T-cell (primary cell): ENCODE measurements at regions of chr14 and their contacts with region 1.

Region 1: GRCh38 chr14:64971943-64972791 is at the start of gene RAB15:
- DNase-seq: peak in 31 of 35 experiments; percentile 2 to 58 (median 28)
- ATAC-seq: peak; percentile 72 to 76 (median 74)
- H3K4me3 ChIP-seq: peak within 1 kb of the TSS; percentile 67 to 69
- H3K4me3 Mint-ChIP-seq: peak within 1 kb of the TSS; percentile 79 to 88 (median 83)
- H3K27ac ChIP-seq: no peak within 1 kb of the TSS
- H3K27ac Mint-ChIP-seq: peak within 1 kb of the TSS; percentile 27 to 53
- H3K4me1 ChIP-seq: peaks cover 0 to 16% of the 10 kb centered on the region in 2 experiments
- H3K4me1 Mint-ChIP-seq: peaks cover 22 to 26% (median 25%) of the 10 kb centered on the region in 3 donors
- H3K27me3 ChIP-seq: peaks cover 0 to 12% of the 10 kb centered on the region in 2 experiments
- H3K27me3 Mint-ChIP-seq: no peaks in the 10 kb centered on the region
- total RNA-seq, gene RAB15: 3.9 to 9.7 (median 4.3) TPM

Region 2: GRCh38 chr14:64215258-64215657 is 756.9 kb before region 1 on chr14:
- CTCF ChIA-PET with region 1: interaction called in 1 of 2 experiments, 11 read pairs
- POLR2A ChIA-PET with region 1: no interaction called
- DNase-seq: no peak
- ATAC-seq: no peak
- H3K4me3 ChIP-seq: no peak overlapping the region
- H3K4me3 Mint-ChIP-seq: no peak overlapping the region
- H3K27ac ChIP-seq: no peak overlapping the region
- H3K27ac Mint-ChIP-seq: no peak overlapping the region
- H3K4me1 ChIP-seq: no peaks in the 10 kb centered on the region
- H3K4me1 Mint-ChIP-seq: no peaks in the 10 kb centered on the region
- H3K27me3 ChIP-seq: no peaks in the 10 kb centered on the region
- H3K27me3 Mint-ChIP-seq: no peaks in the 10 kb centered on the region

Region 3: GRCh38 chr14:65054471-65055085 is 82.4 kb after region 1 on chr14:
- CTCF ChIA-PET with region 1: no interaction called
- POLR2A ChIA-PET with region 1: no interaction called
- DNase-seq: peak in 1 of 35 experiments; percentile 19
- ATAC-seq: peak in 1 of 4 experiments; percentile 19
- H3K4me3 ChIP-seq: no peak overlapping the region
- H3K4me3 Mint-ChIP-seq: no peak overlapping the region
- H3K27ac ChIP-seq: no peak overlapping the region
- H3K27ac Mint-ChIP-seq: peak overlapping the region in 1 of 2 donors; percentile 56
- H3K4me1 ChIP-seq: no peaks in the 10 kb centered on the region
- H3K4me1 Mint-ChIP-seq: peaks cover 2 to 7% (median 2%) of the 10 kb centered on the region in 3 donors
- H3K27me3 ChIP-seq: no peaks in the 10 kb centered on the region
- H3K27me3 Mint-ChIP-seq: no peaks in the 10 kb centered on the region